ENCODE measurements at regions of chr6 and their contacts with region 1.

Region 1: GRCh38 chr6:53544470-53545308 is at the start of gene GCLC:
- DNase-seq: peak; percentile 93
- ATAC-seq: peak; percentile 69
- H3K4me3 ChIP-seq: peak within 1 kb of the TSS; percentile 71 to 91
- H3K27ac ChIP-seq: peak within 1 kb of the TSS; percentile 88
- H3K4me1 ChIP-seq: peaks cover 6 to 43% of the 10 kb centered on the region in 2 experiments; a peak in 3 of 4 replicates
- H3K27me3 ChIP-seq: no peaks in the 10 kb centered on the region
- CTCF ChIP-seq: peak; percentile 41 to 49 (median 41)
- POLR2A ChIP-seq: peak; percentile 80
- RAD21 ChIP-seq: peak; percentile 73
- total RNA-seq, gene GCLC: 72.0 TPM

Region 2: DNA sequence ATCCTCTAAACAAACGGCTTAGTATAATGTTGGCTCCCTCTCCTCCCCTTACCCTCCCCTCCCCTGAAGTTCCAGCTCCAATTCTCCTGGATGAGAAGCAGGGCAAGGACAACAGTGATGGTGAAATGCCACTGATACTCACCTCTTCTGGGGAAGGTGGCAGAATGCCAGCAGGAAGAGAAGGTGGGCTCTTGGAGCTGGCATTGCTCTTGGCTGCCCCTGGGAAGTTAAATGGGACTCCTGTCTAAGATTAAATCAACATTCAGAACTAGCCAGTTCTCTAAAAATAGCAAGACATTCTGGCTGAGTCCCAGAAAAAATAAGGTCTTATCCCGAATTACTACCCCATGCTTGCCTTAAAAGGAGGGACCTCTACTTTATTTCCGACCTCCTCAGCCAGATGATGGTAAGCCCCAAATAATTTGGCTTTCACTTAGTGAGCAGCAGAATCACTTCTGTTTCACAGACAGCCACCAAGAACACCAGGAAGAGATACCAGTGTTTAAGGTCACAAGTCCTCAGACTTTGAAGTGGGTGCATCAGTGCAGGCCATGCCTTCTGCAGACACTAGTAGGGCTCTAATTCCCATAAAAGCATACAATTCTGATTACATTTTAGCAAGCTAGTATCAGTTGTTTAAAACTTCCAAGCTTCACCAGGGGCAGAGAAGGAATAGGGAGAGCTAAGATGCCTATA is 1404.6 kb before region 1 on chr6:
- CTCF ChIA-PET with region 1: no interaction called
- POLR2A ChIA-PET with region 1: no interaction called
- RAD21 ChIA-PET with region 1: no interaction called
- intact Hi-C with region 1: no loop called
- DNase-seq: no peak
- ATAC-seq: no peak
- H3K4me3 ChIP-seq: no peak overlapping the region
- H3K27ac ChIP-seq: no peak overlapping the region
- H3K4me1 ChIP-seq: no peaks in the 10 kb centered on the region
- H3K27me3 ChIP-seq: peaks cover 77% of the 10 kb centered on the region
- CTCF ChIP-seq: no peak
- POLR2A ChIP-seq: no peak
- RAD21 ChIP-seq: no peak

Region 3: GRCh38 chr6:53437557-53438202 is 107.0 kb before region 1 on chr6:
- CTCF ChIA-PET with region 1: no interaction called
- POLR2A ChIA-PET with region 1: no interaction called
- RAD21 ChIA-PET with region 1: no interaction called
- intact Hi-C with region 1: no loop called
- DNase-seq: peak; percentile 67
- ATAC-seq: peak; percentile 98
- H3K4me3 ChIP-seq: no peak overlapping the region
- H3K27ac ChIP-seq: no peak overlapping the region
- H3K4me1 ChIP-seq: peaks cover 0 to 9% of the 10 kb centered on the region in 2 experiments; a peak in 2 of 4 replicates
- H3K27me3 ChIP-seq: no peaks in the 10 kb centered on the region
- CTCF ChIP-seq: peak; percentile 75 to 97 (median 90)
- POLR2A ChIP-seq: no peak
- RAD21 ChIP-seq: peak; percentile 91

Region 4: GRCh38 chr6:53615633-53616449 is 71.2 kb after region 1 on chr6:
- CTCF ChIA-PET with region 1: no interaction called
- POLR2A ChIA-PET with region 1: interaction called, 5 read pairs
- RAD21 ChIA-PET with region 1: no interaction called
- intact Hi-C with region 1: loop called (anchors 1 kb)
- DNase-seq: peak; percentile 99
- ATAC-seq: peak; percentile 89
- H3K4me3 ChIP-seq: peak overlapping the region in 1 of 2 experiments; percentile 37; a peak in 2 of 4 replicates
- H3K27ac ChIP-seq: peak overlapping the region; percentile 79
- H3K4me1 ChIP-seq: peaks cover 23 to 59% of the 10 kb centered on the region in 2 experiments
- H3K27me3 ChIP-seq: no peaks in the 10 kb centered on the region
- CTCF ChIP-seq: no peak
- POLR2A ChIP-seq: no peak
- RAD21 ChIP-seq: no peak; the same call in none of the 2 replicates

Region 5: GRCh38 chr6:53651764-53652401 is 107.2 kb after region 1 on chr6:
- CTCF ChIA-PET with region 1: interaction called, 13 read pairs
- POLR2A ChIA-PET with region 1: interaction called, 7 read pairs
- RAD21 ChIA-PET with region 1: interaction called, 3 read pairs
- intact Hi-C with region 1: loop called (anchors 1 kb)
- DNase-seq: peak; percentile 88
- ATAC-seq: peak; percentile 93
- H3K4me3 ChIP-seq: peak overlapping the region; percentile 50 to 58
- H3K27ac ChIP-seq: peak overlapping the region; percentile 89
- H3K4me1 ChIP-seq: peaks cover 4 to 31% of the 10 kb centered on the region in 2 experiments; a peak in 3 of 4 replicates
- H3K27me3 ChIP-seq: no peaks in the 10 kb centered on the region
- CTCF ChIP-seq: peak in 2 of 3 experiments; percentile 13 to 33; a peak in 2 of 6 replicates
- POLR2A ChIP-seq: peak; percentile 56
- RAD21 ChIP-seq: peak; percentile 48

Measured in HCT116 (cell line).